Activated T-helper 1 cell treated with anti-CD3 and anti-CD28 coated beads, Interleukin-12 subunit alpha, Interleukin-12 subunit beta, Interleukin-2, Interleukin-4 antibody, amounts not matched to agents 30 ng/mL and 10 ng/mL and 1 ng/mL, durations not matched to agents 14 hours and 24 hours and 36 hours (primary cell): ENCODE measurements at regions of chr19 and their contacts with region 1.

Region 1: GRCh38 chr19:52889932-52890331 is 7.5 kb downstream of the ZNF320 start:
- DNase-seq: no peak
- H3K4me3 Mint-ChIP-seq: no peak overlapping the region
- H3K27ac Mint-ChIP-seq: no peak overlapping the region
- H3K4me1 Mint-ChIP-seq: peaks cover 3% of the 10 kb centered on the region
- H3K27me3 Mint-ChIP-seq: no peaks in the 10 kb centered on the region

Region 2: GRCh38 chr19:52910648-52911047 is 20.7 kb after region 1 on chr19:
- intact Hi-C with region 1: loop called (anchors 2 kb)
- DNase-seq: no peak
- H3K4me3 Mint-ChIP-seq: no peak overlapping the region
- H3K27ac Mint-ChIP-seq: no peak overlapping the region
- H3K4me1 Mint-ChIP-seq: no peaks in the 10 kb centered on the region
- H3K27me3 Mint-ChIP-seq: no peaks in the 10 kb centered on the region

Region 3: GRCh38 chr19:52922841-52923777 is 33.2 kb after region 1 on chr19 and contains the start of gene ZNF888:
- intact Hi-C with region 1: no loop called
- DNase-seq: peak; percentile 77
- H3K4me3 Mint-ChIP-seq: peak within 1 kb of the TSS; percentile 93
- H3K27ac Mint-ChIP-seq: peak within 1 kb of the TSS; percentile 96
- H3K4me1 Mint-ChIP-seq: peaks cover 31% of the 10 kb centered on the region
- H3K27me3 Mint-ChIP-seq: no peaks in the 10 kb centered on the region
- total RNA-seq, gene ZNF888: 4.2 and 4.6 TPM in 2 replicates

Region 4: GRCh38 chr19:53037101-53038097 is 147.5 kb after region 1 on chr19:
- intact Hi-C with region 1: no loop called
- DNase-seq: no peak
- H3K4me3 Mint-ChIP-seq: peak overlapping the region; percentile 37
- H3K27ac Mint-ChIP-seq: no peak overlapping the region
- H3K4me1 Mint-ChIP-seq: no peaks in the 10 kb centered on the region
- H3K27me3 Mint-ChIP-seq: no peaks in the 10 kb centered on the region